IMR-90 (cell line): ENCODE measurements at regions of chr11 and their contacts with region 1.

Region 1: GRCh38 chr11:86818466-86819192 is 18.3 kb downstream of the PRSS23 start:
- DNase-seq: peak; percentile 81
- ATAC-seq: peak; percentile 48
- H3K4me3 ChIP-seq: no peak overlapping the region
- H3K27ac ChIP-seq: no peak overlapping the region
- H3K4me1 ChIP-seq: peaks cover 15% of the 10 kb centered on the region
- H3K27me3 ChIP-seq: no peaks in the 10 kb centered on the region
- CTCF ChIP-seq: peak; percentile 87
- POLR2A ChIP-seq: 0 out of 2 replicates have a peak, but pooled peaks have one; percentile 39
- RAD21 ChIP-seq: peak; percentile 94

Region 2: DNA sequence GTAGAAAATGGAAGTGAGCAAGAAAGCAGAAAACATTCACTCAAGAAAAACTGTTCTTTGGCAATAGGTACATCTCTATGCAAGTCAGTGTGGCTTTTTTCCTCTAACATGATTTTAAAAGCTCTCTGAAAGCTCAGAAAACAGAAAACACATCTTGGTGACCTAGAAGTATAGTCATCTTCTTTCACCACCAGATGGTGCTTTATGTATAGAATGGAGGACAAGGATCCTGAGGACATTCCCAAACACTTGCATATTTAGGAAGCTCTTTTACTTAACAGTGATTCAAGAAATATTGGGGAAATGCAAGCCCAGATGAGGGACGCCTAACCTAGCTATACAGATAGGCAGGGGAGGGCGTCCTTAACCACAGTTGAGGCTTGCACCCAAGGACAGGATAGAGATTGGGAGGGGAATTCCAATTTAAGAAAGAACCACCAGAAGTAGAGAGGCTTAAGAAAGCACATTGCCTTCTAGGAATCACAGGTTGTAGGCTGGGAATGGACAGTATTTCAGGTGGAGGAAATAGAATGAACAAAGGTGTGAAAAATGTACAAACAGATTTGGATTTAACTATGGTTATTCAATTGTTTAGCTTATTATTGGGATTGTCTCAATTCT is 457.7 kb before region 1 on chr11:
- CTCF ChIA-PET with region 1: no interaction called
- POLR2A ChIA-PET with region 1: no interaction called
- dilution Hi-C with region 1: no loop called
- in situ Hi-C with region 1: loop called (anchors 10 kb)
- intact Hi-C with region 1: loop called (anchors 2 kb)
- DNase-seq: peak; percentile 73
- ATAC-seq: peak; percentile 89
- H3K4me3 ChIP-seq: no peak overlapping the region
- H3K27ac ChIP-seq: no peak overlapping the region
- H3K4me1 ChIP-seq: peaks cover 3% of the 10 kb centered on the region; the same call in 1 of the 2 replicates
- H3K27me3 ChIP-seq: no peaks in the 10 kb centered on the region
- CTCF ChIP-seq: peak; percentile 63
- POLR2A ChIP-seq: no peak
- RAD21 ChIP-seq: peak; percentile 68

Region 3: GRCh38 chr11:86523738-86524619 is 294.6 kb before region 1 on chr11:
- CTCF ChIA-PET with region 1: no interaction called
- POLR2A ChIA-PET with region 1: no interaction called
- dilution Hi-C with region 1: no loop called
- in situ Hi-C with region 1: no loop called
- intact Hi-C with region 1: loop called (anchors 2 kb)
- DNase-seq: peak; percentile 99
- ATAC-seq: peak; percentile 89
- H3K4me3 ChIP-seq: no peak overlapping the region
- H3K27ac ChIP-seq: no peak overlapping the region; the same call in 1 of the 2 replicates
- H3K4me1 ChIP-seq: peaks cover 17% of the 10 kb centered on the region
- H3K27me3 ChIP-seq: no peaks in the 10 kb centered on the region
- CTCF ChIP-seq: no peak
- POLR2A ChIP-seq: no peak
- RAD21 ChIP-seq: no peak

Region 4: GRCh38 chr11:86632499-86633269 is 185.9 kb before region 1 on chr11:
- CTCF ChIA-PET with region 1: interaction called, 3 read pairs
- POLR2A ChIA-PET with region 1: no interaction called
- dilution Hi-C with region 1: no loop called
- in situ Hi-C with region 1: no loop called
- intact Hi-C with region 1: loop called (anchors 5 kb)
- DNase-seq: peak; percentile 99
- ATAC-seq: peak; percentile 93
- H3K4me3 ChIP-seq: no peak overlapping the region
- H3K27ac ChIP-seq: peak overlapping the region; percentile 47
- H3K4me1 ChIP-seq: peaks cover 25% of the 10 kb centered on the region
- H3K27me3 ChIP-seq: no peaks in the 10 kb centered on the region
- CTCF ChIP-seq: no peak; the same call in 1 of the 2 replicates
- POLR2A ChIP-seq: peak; percentile 37; the same call in 1 of the 2 replicates
- RAD21 ChIP-seq: peak; percentile 47

Region 5: DNA sequence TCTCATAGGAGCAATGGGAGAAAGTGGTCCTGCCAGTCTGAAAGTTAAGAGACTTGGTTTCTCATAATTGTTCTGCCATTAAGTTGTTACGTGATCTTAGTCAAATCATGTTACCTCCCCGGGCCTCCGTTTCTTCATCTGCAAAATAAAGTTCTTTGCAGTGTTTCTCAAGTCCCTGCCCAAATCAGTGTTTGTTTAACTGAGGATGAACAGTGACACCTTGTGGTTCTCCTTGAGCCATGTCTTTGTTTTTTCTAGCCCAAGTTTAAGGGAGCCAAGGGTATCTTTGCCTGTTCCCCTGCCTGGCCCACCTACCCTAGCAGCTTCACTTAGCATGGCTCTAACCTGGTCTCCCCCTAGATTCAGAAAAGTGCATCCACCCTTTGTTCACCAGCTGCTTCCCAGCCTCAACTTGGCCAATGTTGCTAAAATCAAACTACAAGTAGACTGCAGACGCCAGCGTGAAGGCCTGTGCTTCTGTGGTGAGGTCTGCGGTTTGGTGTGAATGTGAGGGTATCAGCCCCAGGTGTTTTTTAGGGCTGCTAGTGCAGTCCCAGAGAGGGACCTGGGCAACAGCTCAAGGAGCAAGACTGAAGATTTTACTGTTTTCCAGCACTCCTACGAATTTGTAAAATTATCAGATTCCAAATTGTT is 101.1 kb after region 1 on chr11:
- CTCF ChIA-PET with region 1: no interaction called
- POLR2A ChIA-PET with region 1: no interaction called
- dilution Hi-C with region 1: no loop called
- in situ Hi-C with region 1: no loop called
- intact Hi-C with region 1: loop called (anchors 1 kb)
- DNase-seq: peak; percentile 81
- ATAC-seq: peak; percentile 70
- H3K4me3 ChIP-seq: no peak overlapping the region
- H3K27ac ChIP-seq: no peak overlapping the region
- H3K4me1 ChIP-seq: peaks cover 8% of the 10 kb centered on the region
- H3K27me3 ChIP-seq: no peaks in the 10 kb centered on the region
- CTCF ChIP-seq: peak; percentile 82
- POLR2A ChIP-seq: no peak
- RAD21 ChIP-seq: peak; percentile 85